CD8-positive, alpha-beta T cell (primary cell): ENCODE measurements at regions of chr19 and their contacts with region 1.

Region 1: DNA sequence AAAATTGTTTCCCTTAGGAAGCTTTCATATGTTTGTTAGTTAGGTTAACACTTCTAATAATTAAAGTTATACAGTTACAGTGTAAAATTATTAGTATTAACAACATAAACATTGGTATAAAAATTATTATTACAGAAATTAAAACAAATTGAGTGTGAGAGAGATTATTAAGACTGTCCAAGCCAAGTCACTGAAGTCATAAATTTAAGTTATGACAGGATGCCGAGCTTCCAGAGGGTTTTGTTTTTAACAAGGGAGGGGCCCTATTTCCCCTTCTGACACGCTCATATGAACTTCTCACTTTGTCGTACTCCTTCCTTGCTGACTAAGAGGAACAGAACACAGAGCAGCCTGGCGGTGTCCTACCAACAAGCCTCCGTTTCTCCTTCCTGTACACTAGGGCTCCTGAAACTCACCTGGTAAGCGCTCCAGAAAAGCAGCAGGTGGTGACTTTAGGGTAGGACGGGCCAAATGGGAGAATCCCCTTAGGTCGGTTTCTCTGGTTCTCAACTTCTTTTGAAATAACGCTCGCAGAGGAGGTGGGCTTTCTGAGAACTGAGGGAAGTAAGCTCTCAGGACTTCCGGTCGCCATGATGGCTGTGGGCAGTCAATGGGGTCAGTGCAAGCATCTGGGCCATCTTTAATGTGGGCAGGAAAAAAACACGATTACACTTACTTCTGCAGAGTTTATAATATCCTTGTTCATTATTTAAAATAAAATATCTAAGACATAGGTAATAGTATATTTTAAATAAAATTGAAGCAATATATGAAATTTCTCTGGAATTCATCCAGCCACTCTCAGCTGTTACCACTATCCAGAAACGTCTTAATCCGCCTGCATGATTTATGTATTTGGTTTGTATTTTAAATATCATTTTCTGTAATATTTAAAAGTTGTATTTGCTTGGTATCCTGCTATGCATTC is at the start of gene CARD8:
- DNase-seq: peak; percentile 58 to 93 (median 83)
- ATAC-seq: peak; percentile 87
- H3K4me3 ChIP-seq: peak within 1 kb of the TSS; percentile 78 to 89
- H3K4me3 Mint-ChIP-seq: peak within 1 kb of the TSS; percentile 96
- H3K27ac ChIP-seq: peak within 1 kb of the TSS; percentile 84 to 94
- H3K27ac Mint-ChIP-seq: peak within 1 kb of the TSS; percentile 97
- H3K4me1 ChIP-seq: peaks cover 69% of the 10 kb centered on the region
- H3K4me1 Mint-ChIP-seq: peaks cover 75% of the 10 kb centered on the region
- H3K27me3 ChIP-seq: no peaks in the 10 kb centered on the region
- H3K27me3 Mint-ChIP-seq: no peaks in the 10 kb centered on the region
- CTCF ChIP-seq: no peak
- total RNA-seq, gene CARD8: 58.8 to 69.1 TPM

Region 2: GRCh38 chr19:48110350-48110966 is 145.2 kb before region 1 on chr19 and contains the start of gene PLA2G4C:
- CTCF ChIA-PET with region 1: interaction called, 9 read pairs
- POLR2A ChIA-PET with region 1: interaction called, 5 read pairs
- intact Hi-C with region 1: loop called (anchors 1 to 2 kb)
- DNase-seq: peak; percentile 57 to 91 (median 83)
- ATAC-seq: peak; percentile 82
- H3K4me3 ChIP-seq: peak within 1 kb of the TSS; percentile 69 to 70
- H3K4me3 Mint-ChIP-seq: peak within 1 kb of the TSS; percentile 77
- H3K27ac ChIP-seq: peak within 1 kb of the TSS; percentile 21 to 70
- H3K27ac Mint-ChIP-seq: peak within 1 kb of the TSS; percentile 52
- H3K4me1 ChIP-seq: peaks cover 5% of the 10 kb centered on the region
- H3K4me1 Mint-ChIP-seq: peaks cover 7% of the 10 kb centered on the region
- H3K27me3 ChIP-seq: no peaks in the 10 kb centered on the region
- H3K27me3 Mint-ChIP-seq: no peaks in the 10 kb centered on the region
- CTCF ChIP-seq: no peak
- total RNA-seq, gene PLA2G4C: 0.73 to 1.1 TPM

Region 3: DNA sequence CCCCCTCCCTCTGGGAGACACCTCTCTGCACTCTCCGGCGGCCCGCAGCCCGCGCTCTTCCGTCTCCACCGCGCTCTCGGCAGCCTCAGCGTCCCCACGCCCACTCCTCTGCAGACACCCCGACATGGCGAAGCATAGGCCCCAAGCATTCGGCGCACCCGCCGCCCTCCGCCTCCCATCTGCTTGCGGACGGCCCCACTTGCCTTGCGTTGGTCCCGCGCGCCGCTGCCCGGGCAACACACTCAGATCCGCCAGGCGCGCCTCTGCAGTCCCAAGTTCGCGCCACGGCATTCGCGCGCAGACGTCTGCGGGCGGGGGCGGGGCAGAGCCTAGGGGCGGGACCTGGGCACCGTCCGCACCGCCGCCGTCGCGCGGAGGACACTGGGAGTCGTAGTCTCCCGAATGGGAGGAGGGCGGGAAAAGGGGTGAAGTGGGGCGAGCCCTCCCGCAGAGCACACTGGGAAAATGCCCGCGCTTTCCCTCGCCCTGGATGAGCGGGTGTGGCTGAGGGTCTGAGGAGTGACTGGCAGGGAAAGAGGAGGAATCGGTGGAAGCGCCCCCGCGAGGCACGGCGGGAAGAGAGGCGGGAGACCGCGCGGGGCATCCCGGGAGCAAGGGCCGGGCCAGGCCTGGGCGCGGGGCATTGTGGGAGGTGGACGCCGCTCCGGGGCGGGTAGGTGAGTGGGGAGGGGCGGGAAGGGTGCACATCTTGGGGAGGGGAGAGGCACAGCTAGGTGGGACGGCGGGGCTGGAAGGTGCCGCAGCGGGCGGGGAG is 85.4 kb before region 1 on chr19 and contains the starts of genes LIG1 and ZSWIM9:
- CTCF ChIA-PET with region 1: interaction called, 4 read pairs
- POLR2A ChIA-PET with region 1: interaction called, 4 read pairs
- intact Hi-C with region 1: loop called (anchors 1 kb)
- DNase-seq: peak; percentile 82 to 95 (median 90)
- ATAC-seq: peak; percentile 81
- H3K4me3 ChIP-seq: peak within 1 kb of the TSS; percentile 96 to 100
- H3K4me3 Mint-ChIP-seq: peak within 1 kb of the TSS; percentile 98
- H3K27ac ChIP-seq: peak within 1 kb of the TSS; percentile 82 to 92
- H3K27ac Mint-ChIP-seq: peak within 1 kb of the TSS; percentile 97
- H3K4me1 ChIP-seq: peaks cover 7% of the 10 kb centered on the region
- H3K4me1 Mint-ChIP-seq: peaks cover 22% of the 10 kb centered on the region
- H3K27me3 ChIP-seq: no peaks in the 10 kb centered on the region
- H3K27me3 Mint-ChIP-seq: no peaks in the 10 kb centered on the region
- CTCF ChIP-seq: peak; percentile 25
- total RNA-seq, gene LIG1: 62.5 to 67.5 TPM
- total RNA-seq, gene ZSWIM9: 2.5 to 4.5 TPM

Region 4: DNA sequence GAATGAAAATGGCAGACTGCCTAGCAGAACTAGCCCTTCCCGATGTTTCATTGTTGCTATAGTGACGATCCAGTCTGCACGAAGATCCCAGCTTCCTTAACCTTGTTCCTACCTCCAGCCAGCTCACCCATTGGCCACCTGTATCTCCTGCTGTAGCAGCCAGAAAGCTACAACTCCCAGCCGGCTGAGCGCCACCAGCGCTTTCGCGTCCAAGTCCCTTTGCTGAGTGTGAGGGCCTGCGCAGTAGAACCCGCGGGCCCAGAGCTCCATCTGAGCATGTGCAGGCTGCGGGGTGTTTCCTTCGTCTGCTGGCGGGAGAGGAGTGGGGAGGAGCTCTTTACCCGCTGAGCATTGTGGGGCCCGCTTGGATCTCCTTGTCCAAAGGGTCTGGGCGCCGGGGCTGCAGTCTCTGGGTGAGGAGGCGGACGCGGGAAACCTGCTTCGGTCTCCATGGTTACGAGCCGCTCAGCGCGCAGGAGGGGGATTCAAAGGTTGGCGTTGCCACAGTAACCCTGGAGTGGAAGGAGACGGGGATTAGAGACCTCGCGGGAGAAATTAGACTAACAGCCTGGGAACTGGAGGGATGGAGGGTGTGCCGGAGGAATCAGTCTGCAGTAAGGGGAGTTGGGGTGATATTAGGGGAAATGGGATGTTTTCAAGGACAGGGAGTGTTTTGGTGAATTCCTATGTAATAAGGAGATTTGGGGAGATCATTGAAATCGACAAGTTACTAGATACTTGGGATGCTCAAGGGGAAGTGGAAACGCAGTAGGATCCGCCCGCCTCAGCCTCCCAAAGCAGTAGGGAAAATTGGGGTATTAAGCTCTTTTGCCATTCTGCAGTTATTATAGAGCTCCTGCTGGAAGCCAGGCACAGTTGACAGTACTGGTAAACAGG is 51.7 kb before region 1 on chr19:
- CTCF ChIA-PET with region 1: interaction called, 29 read pairs
- POLR2A ChIA-PET with region 1: interaction called, 16 read pairs
- intact Hi-C with region 1: loop called (anchors 2 kb)
- DNase-seq: peak; percentile 78 to 95 (median 90)
- ATAC-seq: peak; percentile 100
- H3K4me3 ChIP-seq: peak overlapping the region; percentile 81 to 83
- H3K4me3 Mint-ChIP-seq: no peak overlapping the region
- H3K27ac ChIP-seq: peak overlapping the region; percentile 61 to 72
- H3K27ac Mint-ChIP-seq: no peak overlapping the region
- H3K4me1 ChIP-seq: peaks cover 16% of the 10 kb centered on the region
- H3K4me1 Mint-ChIP-seq: peaks cover 26% of the 10 kb centered on the region
- H3K27me3 ChIP-seq: no peaks in the 10 kb centered on the region
- H3K27me3 Mint-ChIP-seq: no peaks in the 10 kb centered on the region
- CTCF ChIP-seq: no peak

Region 5: GRCh38 chr19:48244281-48244680 is 11.4 kb before region 1 on chr19:
- CTCF ChIA-PET with region 1: interaction called, 16 read pairs
- POLR2A ChIA-PET with region 1: interaction called, 11 read pairs
- intact Hi-C with region 1: loop called (anchors 1 kb)
- DNase-seq: peak in 8 of 9 experiments; percentile 21 to 78 (median 47)
- ATAC-seq: peak; percentile 93
- H3K4me3 ChIP-seq: peak overlapping the region; percentile 20 to 40
- H3K4me3 Mint-ChIP-seq: peak overlapping the region; percentile 71
- H3K27ac ChIP-seq: peak overlapping the region; percentile 37 to 81
- H3K27ac Mint-ChIP-seq: peak overlapping the region; percentile 92
- H3K4me1 ChIP-seq: peaks cover 43% of the 10 kb centered on the region
- H3K4me1 Mint-ChIP-seq: peaks cover 53% of the 10 kb centered on the region
- H3K27me3 ChIP-seq: no peaks in the 10 kb centered on the region
- H3K27me3 Mint-ChIP-seq: no peaks in the 10 kb centered on the region
- CTCF ChIP-seq: no peak

Region 6: DNA sequence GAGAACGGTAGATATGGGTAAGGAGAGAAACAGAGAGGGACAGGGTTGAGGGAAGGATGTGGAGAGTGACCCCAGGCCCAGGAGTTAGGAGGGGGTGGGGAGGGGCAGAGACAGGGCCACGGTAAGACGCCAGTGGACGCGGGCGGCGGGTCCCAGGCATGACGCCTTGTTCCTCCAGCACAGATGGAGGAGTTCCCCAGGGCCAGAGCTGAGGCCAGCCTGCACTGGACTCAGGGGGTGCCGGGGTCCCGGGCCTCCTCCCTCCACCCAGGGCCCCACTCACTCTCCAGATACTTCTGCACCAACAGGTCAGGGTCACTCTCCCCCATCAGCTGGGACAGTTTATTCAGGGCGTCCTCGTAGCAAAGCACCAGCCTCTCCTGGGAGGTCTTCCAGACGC is 47.7 kb after region 1 on chr19:
- CTCF ChIA-PET with region 1: no interaction called
- POLR2A ChIA-PET with region 1: no interaction called
- intact Hi-C with region 1: no loop called
- DNase-seq: no peak
- ATAC-seq: no peak
- H3K4me3 ChIP-seq: no peak overlapping the region
- H3K4me3 Mint-ChIP-seq: no peak overlapping the region
- H3K27ac ChIP-seq: no peak overlapping the region
- H3K27ac Mint-ChIP-seq: no peak overlapping the region
- H3K4me1 ChIP-seq: no peaks in the 10 kb centered on the region
- H3K4me1 Mint-ChIP-seq: no peaks in the 10 kb centered on the region
- H3K27me3 ChIP-seq: no peaks in the 10 kb centered on the region
- H3K27me3 Mint-ChIP-seq: no peaks in the 10 kb centered on the region
- CTCF ChIP-seq: no peak

Region 7: GRCh38 chr19:48381178-48381950 is 125.7 kb after region 1 on chr19:
- CTCF ChIA-PET with region 1: no interaction called
- POLR2A ChIA-PET with region 1: no interaction called
- intact Hi-C with region 1: no loop called
- DNase-seq: no peak
- ATAC-seq: no peak
- H3K4me3 ChIP-seq: no peak overlapping the region
- H3K4me3 Mint-ChIP-seq: no peak overlapping the region
- H3K27ac ChIP-seq: no peak overlapping the region
- H3K27ac Mint-ChIP-seq: no peak overlapping the region
- H3K4me1 ChIP-seq: no peaks in the 10 kb centered on the region
- H3K4me1 Mint-ChIP-seq: no peaks in the 10 kb centered on the region
- H3K27me3 ChIP-seq: no peaks in the 10 kb centered on the region
- H3K27me3 Mint-ChIP-seq: no peaks in the 10 kb centered on the region
- CTCF ChIP-seq: no peak